ENCODE measurements at regions of chr19 and their contacts with region 1.

Region 1: DNA sequence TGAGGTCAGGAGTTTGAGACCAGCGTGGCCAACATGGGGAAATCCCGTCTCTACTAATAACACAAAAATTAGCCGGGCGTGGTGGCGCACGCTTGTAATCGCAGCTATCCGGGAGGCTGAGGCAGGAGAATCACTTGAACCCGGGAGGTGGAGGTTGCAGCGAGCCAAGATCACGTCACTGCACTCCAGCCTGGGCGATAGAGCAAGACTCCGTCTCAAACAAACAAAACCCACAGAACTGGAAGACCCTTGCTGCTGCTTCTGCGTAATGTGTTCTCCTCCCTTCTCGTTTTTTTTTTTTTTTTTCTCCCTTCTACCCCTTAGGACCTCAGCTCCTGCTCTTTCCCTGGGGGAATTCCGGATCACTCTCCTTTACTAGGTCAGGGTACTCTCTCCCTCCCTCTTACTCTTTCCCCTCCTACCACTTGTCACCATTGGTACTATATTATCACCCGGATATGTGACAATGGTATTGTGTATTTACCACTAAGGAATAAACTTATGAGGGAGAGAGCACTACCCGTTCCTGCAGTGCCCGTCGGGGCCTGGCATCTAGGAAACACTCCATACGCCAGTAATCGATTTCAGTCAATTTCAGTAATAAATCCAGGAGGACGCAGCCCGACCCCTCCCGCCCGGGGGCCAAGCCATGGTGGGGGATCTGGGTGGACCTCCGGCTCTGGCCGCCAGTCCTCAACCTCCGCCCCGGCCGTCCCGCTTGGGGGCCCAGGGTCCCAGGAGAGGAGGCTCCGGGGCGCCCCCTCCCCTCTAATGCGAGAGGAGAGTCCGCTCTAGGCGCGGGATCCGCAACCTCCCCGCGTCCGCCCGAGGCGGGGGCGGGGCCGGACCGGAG is 429 bp upstream of the GARRE1 start:
- DNase-seq: peak; percentile 47
- ATAC-seq: peak; percentile 21
- H3K4me3 ChIP-seq: peak overlapping the region; percentile 95
- H3K27ac ChIP-seq: peak overlapping the region; percentile 91
- H3K4me1 ChIP-seq: peaks cover 2% of the 10 kb centered on the region
- H3K27me3 ChIP-seq: no peaks in the 10 kb centered on the region
- CTCF ChIP-seq: no peak
- POLR2A ChIP-seq: peak; percentile 38
- RAD21 ChIP-seq: no peak

Region 2: DNA sequence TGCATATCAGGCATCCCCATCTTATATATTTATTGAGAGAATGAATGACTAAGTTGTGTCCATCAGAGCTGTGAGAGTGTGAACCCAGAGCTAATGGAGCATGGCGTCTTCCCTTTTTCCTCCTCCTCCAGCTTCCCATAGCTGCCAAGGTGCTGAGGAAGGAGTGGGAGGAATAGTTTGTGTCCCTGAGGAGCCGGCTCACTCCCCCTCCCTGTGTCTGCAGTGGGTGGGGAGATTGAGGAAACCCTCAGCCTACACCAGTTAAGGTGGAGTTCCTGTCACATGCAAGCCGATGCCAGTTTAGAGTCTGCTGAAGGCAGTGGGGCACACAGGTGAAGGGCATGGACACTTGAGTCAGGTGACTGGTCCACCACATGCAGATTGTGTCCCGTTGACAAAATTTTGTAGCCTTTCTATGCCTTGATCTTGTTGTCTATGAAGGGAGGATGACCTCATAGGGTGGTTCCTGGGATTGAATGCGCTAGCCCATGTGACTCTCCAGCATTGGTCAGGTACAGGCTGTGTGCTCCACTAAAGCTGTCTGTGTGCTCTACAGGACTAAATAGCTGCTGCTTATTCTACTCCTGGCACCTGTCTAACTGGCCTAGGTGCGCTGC is 63.5 kb after region 1 on chr19:
- CTCF ChIA-PET with region 1: interaction called, 5 read pairs
- POLR2A ChIA-PET with region 1: no interaction called
- dilution Hi-C with region 1: no loop called
- in situ Hi-C with region 1: no loop called
- intact Hi-C with region 1: loop called (anchors 5 kb)
- DNase-seq: no peak
- ATAC-seq: no peak
- H3K4me3 ChIP-seq: no peak overlapping the region
- H3K27ac ChIP-seq: no peak overlapping the region
- H3K4me1 ChIP-seq: peaks cover 30% of the 10 kb centered on the region
- H3K27me3 ChIP-seq: no peaks in the 10 kb centered on the region
- CTCF ChIP-seq: no peak
- POLR2A ChIP-seq: no peak
- RAD21 ChIP-seq: no peak

Region 3: DNA sequence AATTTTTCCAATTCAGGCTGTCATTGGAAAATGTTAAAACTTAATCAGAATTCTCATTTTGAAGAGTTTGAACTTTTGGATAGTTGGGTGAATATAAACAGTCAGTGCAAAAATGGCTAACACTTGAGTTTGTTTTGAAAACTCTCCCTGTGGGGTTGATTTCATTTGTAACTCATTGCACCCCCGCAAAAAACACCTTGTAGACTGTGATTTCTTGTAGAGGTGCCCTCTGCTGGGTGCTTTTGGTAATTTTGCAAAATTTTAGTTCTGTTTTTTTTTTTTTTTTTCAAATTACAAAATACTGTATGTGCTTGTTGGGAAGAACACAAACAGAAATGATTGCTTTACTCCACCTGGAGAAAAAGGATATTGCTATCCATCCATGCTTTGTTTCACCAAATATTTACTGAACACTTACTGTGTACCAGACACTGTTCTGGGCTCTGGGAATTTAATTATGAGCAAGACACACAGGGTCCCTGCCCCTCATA is 82.9 kb after region 1 on chr19:
- CTCF ChIA-PET with region 1: interaction called, 3 read pairs
- POLR2A ChIA-PET with region 1: no interaction called
- dilution Hi-C with region 1: no loop called
- in situ Hi-C with region 1: no loop called
- intact Hi-C with region 1: loop called (anchors 2 kb)
- DNase-seq: peak; percentile 47
- ATAC-seq: peak; percentile 64
- H3K4me3 ChIP-seq: no peak overlapping the region
- H3K27ac ChIP-seq: no peak overlapping the region
- H3K4me1 ChIP-seq: peaks cover 4% of the 10 kb centered on the region; the same call in 1 of the 2 replicates
- H3K27me3 ChIP-seq: no peaks in the 10 kb centered on the region
- CTCF ChIP-seq: peak; percentile 61
- POLR2A ChIP-seq: no peak
- RAD21 ChIP-seq: peak; percentile 53